ENCODE measurements at regions of chr1 and their contacts with region 1.

Region 1: GRCh38 chr1:156383023-156383422 is 14.0 kb downstream of the RHBG start:
- DNase-seq: peak; percentile 46
- ATAC-seq: peak; percentile 97
- H3K4me3 Mint-ChIP-seq: no peak overlapping the region
- H3K27ac Mint-ChIP-seq: no peak overlapping the region
- H3K4me1 Mint-ChIP-seq: peaks cover 6% of the 10 kb centered on the region
- H3K27me3 Mint-ChIP-seq: peaks cover 17% of the 10 kb centered on the region
- CTCF ChIP-seq: no peak

Region 2: DNA sequence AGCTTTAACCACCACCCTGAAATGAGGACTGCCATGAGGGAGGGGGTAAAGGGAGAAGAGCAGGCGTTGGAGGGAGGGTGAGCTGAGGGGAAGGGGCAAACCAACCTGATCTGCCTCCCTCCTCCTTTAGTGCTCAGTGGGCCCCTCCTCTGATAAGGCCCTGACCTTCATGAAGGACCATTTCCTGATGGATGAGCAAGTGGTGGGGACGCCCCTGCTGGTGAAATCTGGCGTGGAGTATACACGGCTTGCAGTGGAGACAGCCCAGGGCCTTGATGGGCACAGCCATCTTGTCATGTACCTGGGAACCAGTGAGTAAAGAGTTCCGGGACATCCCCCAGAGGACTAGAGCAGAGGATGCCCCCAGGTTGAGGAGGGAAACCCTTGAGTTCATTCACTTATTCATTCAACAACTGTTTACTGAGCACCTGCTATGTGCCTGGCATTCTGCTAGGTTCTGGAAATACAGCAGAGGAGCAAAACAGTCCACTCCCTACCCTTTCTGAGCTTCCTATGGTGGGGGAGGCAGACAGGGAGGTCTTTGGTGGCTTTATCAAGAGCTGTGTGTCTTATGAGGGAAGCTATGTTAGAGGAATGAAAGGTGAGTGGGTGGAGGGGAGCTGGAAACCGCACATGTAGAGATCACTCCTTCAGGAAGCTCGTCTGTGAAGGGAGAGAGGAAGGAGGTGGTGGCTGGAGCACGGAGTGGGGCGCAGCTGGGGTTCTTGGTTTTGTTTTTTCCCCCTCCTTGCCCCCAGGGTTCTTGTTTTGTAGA is 210.1 kb before region 1 on chr1:
- CTCF ChIA-PET with region 1: no interaction called
- POLR2A ChIA-PET with region 1: no interaction called
- intact Hi-C with region 1: no loop called
- DNase-seq: no peak
- ATAC-seq: no peak
- H3K4me3 Mint-ChIP-seq: no peak overlapping the region
- H3K27ac Mint-ChIP-seq: peak overlapping the region; percentile 4
- H3K4me1 Mint-ChIP-seq: no peaks in the 10 kb centered on the region
- H3K27me3 Mint-ChIP-seq: no peaks in the 10 kb centered on the region
- CTCF ChIP-seq: no peak

Region 3: DNA sequence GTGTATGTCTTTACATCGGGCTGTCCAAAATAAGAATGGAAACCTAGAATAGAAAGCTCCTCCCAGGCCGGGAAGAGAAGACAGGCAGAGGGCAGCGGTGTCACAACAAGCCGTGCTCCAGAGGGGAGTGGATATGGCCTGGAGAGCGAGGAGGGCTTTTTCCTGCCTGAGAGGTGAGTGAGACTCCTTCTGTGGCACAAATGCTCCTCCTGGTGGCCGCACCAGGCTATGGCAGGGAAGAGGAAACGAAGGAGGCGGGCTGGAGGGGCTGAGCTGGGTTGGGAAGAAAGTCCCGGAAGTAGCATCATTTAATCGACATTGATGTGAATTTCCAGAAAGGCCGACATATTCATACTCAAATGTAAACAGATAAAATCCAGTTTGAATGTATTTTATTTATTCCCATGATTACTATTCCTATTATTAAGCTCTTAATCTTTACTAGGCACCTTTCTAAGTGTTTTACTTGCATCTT is 62.8 kb after region 1 on chr1:
- CTCF ChIA-PET with region 1: interaction called, 223 read pairs
- POLR2A ChIA-PET with region 1: interaction called, 8 read pairs
- intact Hi-C with region 1: loop called (anchors 1 kb)
- DNase-seq: peak; percentile 72
- ATAC-seq: peak; percentile 90
- H3K4me3 Mint-ChIP-seq: no peak overlapping the region
- H3K27ac Mint-ChIP-seq: no peak overlapping the region
- H3K4me1 Mint-ChIP-seq: peaks cover 6% of the 10 kb centered on the region
- H3K27me3 Mint-ChIP-seq: peaks cover 58% of the 10 kb centered on the region
- CTCF ChIP-seq: peak; percentile 98

Region 4: DNA sequence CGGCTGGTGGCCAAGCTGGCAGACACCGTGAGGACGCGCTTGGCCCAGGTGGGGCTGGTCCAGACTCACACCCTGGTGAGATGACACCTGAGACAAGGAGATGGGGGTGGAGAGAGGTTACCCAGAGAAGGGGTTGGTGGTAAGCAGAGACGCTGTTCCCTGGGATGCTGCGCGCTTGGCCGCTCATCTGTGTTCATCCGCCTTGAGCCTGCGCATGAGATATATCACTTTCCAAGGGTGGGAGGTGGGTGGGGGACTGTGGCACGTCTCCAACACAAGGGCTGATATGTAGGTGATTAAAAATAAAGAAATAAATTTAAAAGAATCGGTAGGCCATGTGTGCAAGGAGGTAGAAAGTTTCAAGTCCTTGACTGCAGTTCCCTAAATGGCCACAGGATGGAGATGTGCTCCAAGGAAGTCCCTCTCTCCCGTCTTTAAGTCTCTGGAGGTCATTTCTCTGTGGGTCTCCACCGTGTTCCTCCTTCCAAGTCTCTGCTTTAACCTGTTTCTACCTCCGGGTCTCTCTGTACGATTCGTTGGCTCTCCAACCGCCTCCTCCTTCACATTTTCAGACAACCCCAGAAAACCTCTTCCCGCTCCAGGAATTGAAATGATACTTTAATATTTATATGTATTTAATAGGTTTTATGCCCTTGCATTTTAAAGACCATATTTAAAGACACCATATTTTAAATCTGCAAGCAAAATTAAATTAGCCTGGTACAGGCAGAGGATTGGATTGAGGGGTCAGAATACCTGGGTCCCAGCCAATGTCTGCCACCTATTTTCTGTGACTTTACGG is 201.0 kb after region 1 on chr1:
- CTCF ChIA-PET with region 1: interaction called, 14 read pairs
- POLR2A ChIA-PET with region 1: no interaction called
- intact Hi-C with region 1: no loop called
- DNase-seq: no peak
- ATAC-seq: peak; percentile 54
- H3K4me3 Mint-ChIP-seq: peak overlapping the region; percentile 53
- H3K27ac Mint-ChIP-seq: peak overlapping the region; percentile 99
- H3K4me1 Mint-ChIP-seq: peaks cover 33% of the 10 kb centered on the region
- H3K27me3 Mint-ChIP-seq: no peaks in the 10 kb centered on the region
- CTCF ChIP-seq: no peak

Region 5: GRCh38 chr1:156625436-156626078 is 242.5 kb after region 1 on chr1:
- CTCF ChIA-PET with region 1: interaction called, 8 read pairs
- POLR2A ChIA-PET with region 1: no interaction called
- intact Hi-C with region 1: loop called (anchors 5 kb)
- DNase-seq: peak; percentile 66
- ATAC-seq: peak; percentile 71
- H3K4me3 Mint-ChIP-seq: peak overlapping the region; percentile 74
- H3K27ac Mint-ChIP-seq: peak overlapping the region; percentile 3
- H3K4me1 Mint-ChIP-seq: peaks cover 12% of the 10 kb centered on the region
- H3K27me3 Mint-ChIP-seq: peaks cover 32% of the 10 kb centered on the region
- CTCF ChIP-seq: peak; percentile 27

Measured in activated B cell treated with CpG ODN at 0.5 μM for 24 hours (primary cell).